ENCODE measurements at regions of chr4 and their contacts with region 1.

Region 1: GRCh38 chr4:128553686-128554515 is 255.6 kb upstream of the JADE1 start:
- DNase-seq: peak; percentile 13
- ATAC-seq: peak; percentile 31; the same call in 1 of the 2 replicates
- H3K4me3 ChIP-seq: peak overlapping the region; percentile 76
- H3K27ac ChIP-seq: peak overlapping the region; percentile 34; the same call in 1 of the 2 replicates
- H3K4me1 ChIP-seq: peaks cover 14% of the 10 kb centered on the region
- H3K27me3 ChIP-seq: no peaks in the 10 kb centered on the region
- CTCF ChIP-seq: no peak

Region 2: DNA sequence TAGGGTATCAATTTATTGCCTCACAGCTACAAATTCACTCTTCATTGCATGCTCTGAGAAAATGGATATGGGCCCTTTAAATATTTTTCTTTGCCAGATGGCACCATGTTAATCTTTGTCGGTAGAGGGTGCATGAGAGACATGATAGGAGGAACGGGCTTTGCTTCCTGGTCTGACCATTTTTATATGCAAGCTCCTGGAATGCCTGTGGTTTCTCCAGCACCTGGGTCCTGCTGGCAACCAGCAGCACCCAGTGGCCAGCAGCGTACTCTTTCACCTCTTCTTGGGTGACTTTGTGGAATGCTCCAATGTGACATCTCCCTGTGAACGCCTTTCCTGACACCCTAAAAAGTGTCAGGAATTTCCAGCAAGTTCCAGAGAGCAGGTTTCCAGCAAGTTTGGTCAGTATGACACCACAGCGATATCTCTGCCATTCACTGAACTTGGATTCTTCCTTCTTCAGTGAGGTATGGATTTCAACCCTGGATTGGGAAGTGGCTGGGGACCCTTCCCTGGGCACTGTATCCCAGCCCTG is 126.0 kb before region 1 on chr4:
- CTCF ChIA-PET with region 1: no interaction called
- POLR2A ChIA-PET with region 1: no interaction called
- intact Hi-C with region 1: no loop called
- DNase-seq: peak; percentile 87
- ATAC-seq: peak; percentile 100
- H3K4me3 ChIP-seq: no peak overlapping the region
- H3K27ac ChIP-seq: no peak overlapping the region
- H3K4me1 ChIP-seq: peaks cover 7% of the 10 kb centered on the region
- H3K27me3 ChIP-seq: no peaks in the 10 kb centered on the region
- CTCF ChIP-seq: peak; percentile 77

Region 3: DNA sequence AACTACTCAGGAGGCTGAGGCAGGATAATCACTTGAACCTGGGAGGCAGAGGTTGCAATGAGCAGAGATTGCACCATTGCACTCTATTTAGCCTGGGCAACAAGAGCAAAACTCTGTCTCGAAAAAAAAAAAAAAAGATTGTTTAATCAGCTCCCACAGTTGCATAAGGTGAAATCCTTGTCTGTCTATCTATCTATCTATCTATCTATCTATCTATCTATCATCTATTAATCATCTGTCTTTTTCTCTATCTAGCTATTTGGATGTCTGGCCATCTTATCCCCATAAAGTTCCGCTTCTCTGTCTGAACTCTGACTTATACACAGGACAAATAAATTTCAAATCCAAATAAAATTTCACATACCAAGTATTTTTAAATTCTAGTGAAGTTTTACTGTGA is 43.1 kb before region 1 on chr4:
- CTCF ChIA-PET with region 1: no interaction called
- POLR2A ChIA-PET with region 1: no interaction called
- intact Hi-C with region 1: no loop called
- DNase-seq: no peak
- ATAC-seq: no peak
- H3K4me3 ChIP-seq: no peak overlapping the region
- H3K27ac ChIP-seq: no peak overlapping the region
- H3K4me1 ChIP-seq: no peaks in the 10 kb centered on the region
- H3K27me3 ChIP-seq: no peaks in the 10 kb centered on the region
- CTCF ChIP-seq: no peak

Region 4: GRCh38 chr4:128528793-128529553 is 24.9 kb before region 1 on chr4:
- CTCF ChIA-PET with region 1: no interaction called
- POLR2A ChIA-PET with region 1: no interaction called
- intact Hi-C with region 1: loop called (anchors 2 kb)
- DNase-seq: peak; percentile 88
- ATAC-seq: peak; percentile 82
- H3K4me3 ChIP-seq: peak overlapping the region; percentile 33; the same call in 1 of the 2 replicates
- H3K27ac ChIP-seq: peak overlapping the region; percentile 19
- H3K4me1 ChIP-seq: peaks cover 49% of the 10 kb centered on the region
- H3K27me3 ChIP-seq: no peaks in the 10 kb centered on the region
- CTCF ChIP-seq: no peak

Region 5: DNA sequence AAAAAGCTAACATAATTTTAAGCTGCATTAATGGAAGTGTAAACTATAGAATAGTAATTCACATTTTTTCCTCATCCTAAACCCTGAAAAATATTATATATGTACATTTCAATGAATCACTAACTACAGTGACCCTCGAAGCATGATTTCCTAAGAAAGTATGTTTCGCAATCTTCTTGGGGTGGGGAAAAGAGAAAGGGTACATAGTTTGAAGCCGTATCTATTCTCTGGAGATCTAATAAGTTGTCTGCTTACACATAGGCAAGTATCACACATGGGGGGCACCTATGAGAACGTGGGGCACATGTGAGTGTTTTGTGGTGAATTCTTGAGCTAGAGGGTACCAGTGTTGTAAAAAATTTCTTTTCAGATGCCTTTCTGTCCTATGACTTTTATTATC is 326.8 kb after region 1 on chr4:
- CTCF ChIA-PET with region 1: no interaction called
- POLR2A ChIA-PET with region 1: no interaction called
- intact Hi-C with region 1: no loop called
- DNase-seq: no peak
- ATAC-seq: no peak
- H3K4me3 ChIP-seq: no peak overlapping the region
- H3K27ac ChIP-seq: no peak overlapping the region
- H3K4me1 ChIP-seq: no peaks in the 10 kb centered on the region
- H3K27me3 ChIP-seq: no peaks in the 10 kb centered on the region
- CTCF ChIP-seq: no peak